ENCODE measurements at regions of chr4 and their contacts with region 1.

Region 1: GRCh38 chr4:169601016-169601771 is 11.2 kb downstream of the NEK1 start:
- DNase-seq: no peak
- H3K4me3 ChIP-seq: no peak overlapping the region
- H3K27ac ChIP-seq: no peak overlapping the region
- H3K4me1 ChIP-seq: peaks cover 7 to 15% (median 10%) of the 10 kb centered on the region in 4 experiments
- H3K27me3 ChIP-seq: no peaks in the 10 kb centered on the region

Region 2: DNA sequence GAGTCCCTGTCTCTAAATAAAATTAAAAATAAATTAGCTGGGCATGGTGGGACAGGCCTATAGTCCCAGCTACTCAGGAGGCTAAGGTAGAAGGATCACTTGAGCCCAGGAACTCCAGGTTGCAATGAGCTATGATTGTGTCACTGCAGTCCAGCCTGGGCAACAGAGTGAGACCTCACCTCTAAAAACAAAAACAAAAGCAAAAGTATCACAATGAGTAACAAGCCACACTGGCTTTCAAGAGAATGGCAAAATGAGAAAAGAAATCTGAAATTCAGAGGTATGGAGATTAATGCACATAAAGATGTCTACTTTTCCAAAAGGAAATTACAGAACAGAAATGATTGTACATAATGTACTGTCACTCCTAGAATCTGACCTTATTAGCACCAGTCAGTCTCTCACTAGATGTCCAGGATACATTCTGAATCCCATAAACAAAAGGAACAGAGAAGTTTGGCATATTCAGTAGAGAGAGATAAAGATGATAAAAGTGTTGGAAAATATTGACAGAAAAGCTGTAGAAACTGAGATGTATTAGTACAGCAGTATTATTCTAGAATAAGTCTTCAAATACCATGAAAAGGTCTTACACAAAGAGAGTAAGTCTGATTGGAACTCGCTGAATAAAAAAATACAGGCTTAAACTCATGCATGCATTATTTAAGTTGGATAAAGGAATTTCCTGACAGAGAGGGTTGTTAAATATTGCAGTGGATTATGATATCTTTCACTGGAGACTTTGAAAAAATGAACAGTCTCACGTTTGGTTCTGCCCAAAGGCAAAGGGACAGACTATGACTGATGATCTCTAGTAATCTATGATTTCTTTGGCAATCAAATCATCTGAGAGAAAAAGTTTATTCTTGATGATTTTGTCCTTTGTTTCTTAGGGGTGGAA is 433.0 kb before region 1 on chr4:
- CTCF ChIA-PET with region 1: no interaction called
- POLR2A ChIA-PET with region 1: no interaction called
- DNase-seq: no peak
- H3K4me3 ChIP-seq: no peak overlapping the region
- H3K27ac ChIP-seq: no peak overlapping the region
- H3K4me1 ChIP-seq: no peaks in the 10 kb centered on the region
- H3K27me3 ChIP-seq: no peaks in the 10 kb centered on the region

Region 3: DNA sequence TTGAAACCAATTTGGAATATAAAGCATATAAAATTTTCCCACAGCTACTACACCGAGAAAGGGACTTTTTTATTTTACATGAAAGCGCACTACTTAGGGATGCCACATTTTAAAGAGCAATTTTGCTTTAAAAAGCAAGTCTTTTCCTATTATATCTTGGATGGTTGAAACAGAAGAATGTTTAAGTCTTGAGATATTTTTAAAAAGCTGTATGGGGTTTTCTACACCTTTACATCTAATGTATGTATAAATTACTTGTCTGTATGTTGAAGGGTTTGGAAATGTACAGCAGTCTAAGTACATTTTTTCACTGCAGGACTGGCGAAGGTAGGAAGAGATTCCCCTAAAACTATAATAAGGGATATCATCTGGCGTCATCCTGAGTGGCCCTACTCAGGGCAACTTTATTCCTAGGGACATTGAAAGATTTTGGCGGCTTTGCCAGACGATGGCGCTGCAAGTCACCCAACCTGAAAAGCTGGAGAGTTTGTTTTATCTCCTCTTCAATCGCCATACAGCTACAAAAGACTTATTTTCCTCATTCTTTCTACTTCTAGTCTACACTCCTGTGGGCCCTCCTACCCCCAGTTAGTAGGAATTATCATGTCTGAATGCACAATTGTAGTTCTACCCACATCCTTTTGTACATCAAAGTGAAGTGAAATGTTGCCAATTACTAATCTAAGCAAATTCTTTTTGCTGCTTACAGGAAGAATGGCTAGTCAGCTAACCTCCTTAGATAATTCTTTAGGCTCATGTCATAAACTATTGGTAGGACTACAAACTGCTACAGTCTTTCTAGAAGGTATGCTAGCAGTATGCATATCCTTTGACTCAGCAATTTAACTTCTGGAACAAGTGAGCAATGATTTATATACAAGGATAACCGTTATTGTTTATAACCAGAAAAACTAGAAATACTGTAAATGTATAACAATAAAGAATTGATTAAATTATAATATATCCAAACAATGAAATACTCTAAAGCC is 12.0 kb after region 1 on chr4:
- CTCF ChIA-PET with region 1: interaction called, 16 read pairs
- POLR2A ChIA-PET with region 1: no interaction called
- DNase-seq: peak; percentile 78 to 79 (median 79)
- H3K4me3 ChIP-seq: peak overlapping the region in 6 of 7 experiments; percentile 91 to 99 (median 95)
- H3K27ac ChIP-seq: peak overlapping the region in 1 of 2 experiments; percentile 97
- H3K4me1 ChIP-seq: peaks cover 3 to 28% (median 18%) of the 10 kb centered on the region in 4 experiments
- H3K27me3 ChIP-seq: no peaks in the 10 kb centered on the region